Activated naive CD4-positive, alpha-beta T cell treated with anti-CD3 and anti-CD28 coated beads for 36 hours (primary cell): ENCODE measurements at regions of chr7 and their contacts with region 1.

Region 1: DNA sequence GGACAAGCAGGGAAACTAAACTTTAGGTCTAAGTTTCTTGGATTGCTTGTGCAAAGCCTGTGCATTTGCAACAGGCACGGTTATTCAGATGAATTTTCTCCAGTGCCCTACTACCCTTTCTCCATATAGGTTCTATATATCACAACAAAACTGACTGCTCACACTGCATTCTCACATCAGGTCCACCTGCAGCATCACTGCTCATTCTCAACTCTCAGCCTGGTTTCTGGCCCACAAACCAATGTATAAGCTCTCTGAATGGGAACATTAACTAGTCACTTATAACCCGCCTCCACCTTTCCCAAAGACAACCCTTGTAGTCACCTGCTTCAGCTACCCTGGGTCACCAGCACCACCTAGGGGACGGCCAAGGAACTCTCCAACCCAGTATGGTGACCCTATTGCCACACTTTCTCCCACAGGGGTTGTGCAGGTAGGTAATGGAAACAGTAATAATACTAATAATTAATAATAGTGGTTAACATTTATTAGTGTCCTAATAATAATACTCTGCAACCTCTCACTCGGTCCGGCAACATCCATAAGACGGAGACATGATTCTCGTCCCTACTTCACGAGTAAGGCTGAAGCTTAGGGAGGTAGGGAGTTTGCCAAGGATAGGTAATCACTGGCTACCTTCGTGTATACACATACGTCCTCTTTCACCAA is 97.3 kb downstream of the CLEC2L start:
- DNase-seq: peak; percentile 77
- H3K4me3 Mint-ChIP-seq: no peak overlapping the region
- H3K27ac Mint-ChIP-seq: no peak overlapping the region
- H3K4me1 Mint-ChIP-seq: peaks cover 21% of the 10 kb centered on the region
- H3K27me3 Mint-ChIP-seq: no peaks in the 10 kb centered on the region

Region 2: DNA sequence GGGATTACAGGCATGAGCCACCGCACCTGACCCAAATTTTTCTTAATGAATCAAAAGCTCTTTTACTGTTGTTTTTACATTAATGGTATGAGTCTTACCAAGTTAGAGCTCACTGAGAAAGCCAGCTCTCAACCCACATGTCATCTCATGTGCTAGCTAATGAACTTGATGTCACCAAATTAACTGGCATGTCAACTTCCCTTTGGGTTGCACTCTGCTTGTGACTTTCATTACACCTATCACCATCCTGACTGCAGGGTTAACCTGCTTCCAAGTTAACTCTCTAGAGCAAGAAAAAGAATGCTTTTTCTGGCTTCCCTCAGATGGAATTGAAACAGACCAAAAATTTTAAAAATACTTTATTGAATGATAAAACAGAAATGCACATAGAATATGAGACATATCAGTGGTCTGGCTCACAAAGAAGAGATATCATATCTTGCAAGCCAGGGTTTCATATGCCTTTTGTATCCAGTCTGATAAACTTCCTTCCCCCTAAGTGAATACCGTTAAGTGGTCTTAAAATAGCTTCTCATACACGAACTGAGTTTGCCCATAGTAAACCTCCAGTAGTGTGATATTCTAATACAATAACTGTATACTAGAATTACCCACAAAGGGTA is 1203.6 kb before region 1 on chr7:
- CTCF ChIA-PET with region 1: no interaction called
- intact Hi-C with region 1: no loop called
- DNase-seq: no peak
- H3K4me3 Mint-ChIP-seq: no peak overlapping the region
- H3K27ac Mint-ChIP-seq: no peak overlapping the region
- H3K4me1 Mint-ChIP-seq: no peaks in the 10 kb centered on the region
- H3K27me3 Mint-ChIP-seq: no peaks in the 10 kb centered on the region

Region 3: DNA sequence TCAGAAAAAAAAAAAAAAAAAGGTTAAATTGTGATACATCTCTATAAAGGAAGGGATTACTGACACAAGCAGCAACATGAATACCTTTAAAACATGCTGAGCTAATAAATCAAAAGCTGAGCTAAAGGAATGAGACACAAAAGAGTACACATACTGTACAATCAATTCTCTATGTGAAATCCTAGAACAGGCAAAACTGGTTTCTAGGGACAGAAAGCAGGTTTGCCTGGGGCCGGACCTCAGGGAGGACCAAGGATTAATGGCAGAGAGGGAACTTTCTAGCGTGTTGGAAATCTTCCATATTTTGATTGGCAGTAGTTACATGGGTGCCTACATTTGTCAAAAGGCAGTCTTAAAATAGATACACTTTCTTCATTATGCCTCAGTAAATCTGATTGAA is 189.8 kb before region 1 on chr7:
- CTCF ChIA-PET with region 1: interaction called, 6 read pairs
- intact Hi-C with region 1: loop called (anchors 2 kb)
- DNase-seq: no peak
- H3K4me3 Mint-ChIP-seq: no peak overlapping the region
- H3K27ac Mint-ChIP-seq: no peak overlapping the region
- H3K4me1 Mint-ChIP-seq: peaks cover 5% of the 10 kb centered on the region
- H3K27me3 Mint-ChIP-seq: no peaks in the 10 kb centered on the region

Region 4: DNA sequence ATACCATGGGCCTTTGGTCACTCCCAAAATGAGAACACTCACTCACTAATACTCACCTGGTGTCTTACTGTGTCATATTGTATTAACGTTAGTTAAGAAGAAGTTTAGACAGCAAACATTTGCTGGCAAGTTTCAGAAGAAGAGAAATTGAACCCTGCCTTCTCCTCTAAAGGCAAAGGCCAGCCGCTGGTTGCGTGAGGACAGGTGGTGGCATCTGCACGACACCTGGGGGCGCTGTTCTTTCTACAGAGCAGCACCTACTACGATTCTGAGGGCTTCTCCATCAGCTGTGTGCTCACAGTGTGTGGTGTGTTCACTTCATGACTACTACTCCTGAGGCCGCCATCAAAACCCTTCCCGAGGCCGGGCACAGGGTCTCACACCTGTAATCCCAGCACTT is 115.2 kb before region 1 on chr7:
- CTCF ChIA-PET with region 1: interaction called, 4 read pairs
- intact Hi-C with region 1: loop called (anchors 1 kb)
- DNase-seq: peak; percentile 50
- H3K4me3 Mint-ChIP-seq: no peak overlapping the region
- H3K27ac Mint-ChIP-seq: no peak overlapping the region
- H3K4me1 Mint-ChIP-seq: no peaks in the 10 kb centered on the region
- H3K27me3 Mint-ChIP-seq: no peaks in the 10 kb centered on the region

Region 5: GRCh38 chr7:139602143-139602722 is 18.6 kb before region 1 on chr7:
- CTCF ChIA-PET with region 1: interaction called, 12 read pairs
- intact Hi-C with region 1: no loop called
- DNase-seq: no peak
- H3K4me3 Mint-ChIP-seq: no peak overlapping the region
- H3K27ac Mint-ChIP-seq: no peak overlapping the region
- H3K4me1 Mint-ChIP-seq: no peaks in the 10 kb centered on the region
- H3K27me3 Mint-ChIP-seq: no peaks in the 10 kb centered on the region

Region 6: DNA sequence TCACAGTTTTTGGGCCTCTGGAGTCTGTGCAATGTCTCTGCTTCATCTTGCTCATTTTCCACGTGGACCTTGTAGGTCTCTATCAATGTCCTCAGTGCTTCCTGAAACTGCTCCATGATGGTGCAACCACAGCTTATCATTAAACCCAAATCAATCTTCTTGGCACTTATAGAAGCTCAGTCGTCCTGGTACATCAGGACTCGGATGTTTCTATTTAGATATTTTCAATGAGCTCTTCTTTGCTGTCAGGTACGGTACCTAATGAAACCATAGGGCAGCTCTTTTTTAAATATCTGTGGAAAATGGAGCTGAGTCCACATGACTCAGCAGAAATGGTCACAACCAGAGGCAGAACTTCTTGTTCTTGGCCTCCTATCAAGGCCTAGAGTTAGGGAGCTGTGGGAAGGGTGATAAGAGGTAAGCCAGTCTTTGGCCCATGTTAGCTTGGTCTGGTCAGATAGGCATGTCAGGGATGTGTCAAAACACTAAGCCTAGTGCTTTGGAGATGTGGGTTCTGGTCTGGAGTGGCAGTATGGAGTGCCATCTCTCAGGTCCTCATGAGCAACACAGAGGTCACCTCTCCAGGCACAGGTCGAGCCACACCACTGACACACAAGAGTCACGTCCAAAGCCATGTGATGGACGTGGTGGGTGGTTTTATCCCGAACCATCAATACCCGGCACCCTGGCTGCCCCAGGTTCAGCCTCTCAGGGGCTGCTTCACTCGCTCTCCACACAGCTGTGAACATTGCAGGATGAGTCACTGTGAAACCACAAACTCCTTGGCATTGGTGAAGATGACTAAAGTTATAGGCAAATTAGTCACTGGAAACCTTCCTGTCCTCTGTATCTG is 295.3 kb after region 1 on chr7:
- CTCF ChIA-PET with region 1: no interaction called
- intact Hi-C with region 1: loop called (anchors 5 kb)
- DNase-seq: peak; percentile 87
- H3K4me3 Mint-ChIP-seq: no peak overlapping the region
- H3K27ac Mint-ChIP-seq: peak overlapping the region; percentile 19
- H3K4me1 Mint-ChIP-seq: peaks cover 24% of the 10 kb centered on the region
- H3K27me3 Mint-ChIP-seq: peaks cover 2% of the 10 kb centered on the region